ENCODE measurements at regions of chr2 and their contacts with region 1.

Region 1: DNA sequence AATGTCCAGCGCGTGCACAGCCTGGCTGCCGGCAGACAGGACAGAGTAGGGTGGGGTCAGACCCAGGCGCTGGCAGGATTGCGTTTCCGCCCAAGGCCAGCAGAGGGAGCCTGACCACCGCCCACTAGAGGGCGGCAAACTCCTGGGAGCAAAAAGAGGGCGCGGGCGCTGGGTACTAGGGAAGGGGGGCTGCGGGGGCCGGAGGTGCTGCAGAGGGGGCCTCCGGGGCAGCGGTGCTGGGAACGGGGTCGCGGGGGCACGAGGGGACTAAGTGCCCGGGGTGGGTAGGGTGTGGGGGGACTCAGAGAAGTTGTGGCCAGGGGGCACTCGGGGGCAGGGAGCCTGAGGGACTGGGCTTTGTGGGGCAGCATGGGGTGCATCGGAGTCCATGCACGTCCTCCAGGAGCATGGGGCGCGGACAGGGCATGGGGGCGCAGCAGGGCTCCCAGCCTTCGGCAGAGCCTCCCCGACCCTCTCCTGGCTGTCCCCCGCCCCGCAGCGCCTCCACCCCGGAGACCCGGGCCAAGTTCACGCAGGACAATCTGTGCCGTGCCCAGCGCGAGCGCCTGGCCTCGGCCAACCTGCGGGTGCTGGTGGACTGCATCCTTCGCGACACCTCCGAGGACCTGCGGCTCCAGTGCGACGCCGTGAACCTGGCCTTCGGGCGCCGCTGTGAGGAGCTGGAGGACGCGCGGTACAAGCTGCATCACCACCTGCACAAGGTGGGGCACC is 3.2 kb downstream of the TEKT4 start:
- DNase-seq: peak; percentile 24
- ATAC-seq: peak; percentile 95
- H3K4me3 ChIP-seq: no peak overlapping the region
- H3K27ac ChIP-seq: no peak overlapping the region
- H3K4me1 ChIP-seq: no peaks in the 10 kb centered on the region
- H3K27me3 ChIP-seq: no peaks in the 10 kb centered on the region
- CTCF ChIP-seq: peak; percentile 99 to 100 (median 100)
- POLR2A ChIP-seq: no peak
- RAD21 ChIP-seq: peak; percentile 80

Region 2: DNA sequence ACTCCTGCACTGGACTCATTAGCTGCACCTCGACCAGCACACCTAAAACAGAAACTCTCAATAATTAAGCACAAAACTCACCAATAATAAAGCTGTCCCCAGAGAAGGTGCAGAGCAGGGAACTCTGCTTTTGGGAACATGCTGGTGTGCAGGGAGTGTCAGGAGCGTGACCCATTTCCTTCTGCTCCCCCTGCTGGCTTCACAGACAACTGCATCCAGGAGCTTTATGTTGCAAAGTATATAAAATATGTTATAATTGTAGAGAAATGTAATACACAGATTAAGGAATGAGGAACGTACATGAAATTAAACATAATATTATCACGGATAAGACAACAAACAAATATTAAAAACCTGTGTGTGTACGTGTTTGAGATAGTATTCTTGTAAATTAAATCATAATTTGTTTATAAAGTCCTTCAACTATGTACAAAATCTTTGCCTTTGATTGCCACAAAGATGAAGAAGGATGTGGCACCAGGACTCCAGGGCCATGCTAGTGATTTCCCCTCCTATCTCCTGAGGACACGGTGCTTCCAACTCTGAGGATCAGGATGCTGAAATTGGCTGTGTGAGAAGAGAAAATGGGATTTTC is 82.5 kb after region 1 on chr2:
- CTCF ChIA-PET with region 1: interaction called, 7 read pairs
- POLR2A ChIA-PET with region 1: no interaction called
- RAD21 ChIA-PET with region 1: no interaction called
- intact Hi-C with region 1: loop called (anchors 10 kb)
- DNase-seq: peak; percentile 13
- ATAC-seq: peak; percentile 91
- H3K4me3 ChIP-seq: no peak overlapping the region
- H3K27ac ChIP-seq: no peak overlapping the region
- H3K4me1 ChIP-seq: no peaks in the 10 kb centered on the region
- H3K27me3 ChIP-seq: peaks cover 34% of the 10 kb centered on the region
- CTCF ChIP-seq: peak; percentile 77 to 83 (median 79)
- POLR2A ChIP-seq: no peak
- RAD21 ChIP-seq: peak; percentile 54

Measured in HCT116 (cell line).